PC-9 (cell line): ENCODE measurements at regions of chr3 and their contacts with region 1.

Region 1: DNA sequence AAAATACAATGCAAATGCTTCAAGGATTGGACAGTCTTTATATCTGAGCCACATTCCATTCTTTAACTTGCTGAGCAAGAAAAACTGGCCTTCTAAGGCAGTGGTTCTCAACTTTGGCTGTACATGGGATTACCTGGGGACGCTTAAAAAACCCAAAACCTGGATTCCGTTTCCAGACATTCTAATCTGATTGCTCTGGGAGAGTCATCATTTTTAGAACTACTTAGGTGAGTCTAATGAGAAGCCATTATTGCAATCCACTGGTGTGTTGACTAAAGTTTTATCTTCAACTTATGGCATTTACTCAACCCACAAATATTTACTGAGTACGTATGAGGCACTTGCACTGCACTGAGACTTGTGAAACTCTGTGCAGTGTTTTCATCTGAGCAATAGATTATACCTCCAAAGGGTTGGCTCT is 195.7 kb upstream of the ATP11B start:
- DNase-seq: peak; percentile 48 to 98
- H3K4me3 ChIP-seq: no peak overlapping the region
- H3K27ac ChIP-seq: peak overlapping the region; percentile 68
- H3K4me1 ChIP-seq: peaks cover 25% of the 10 kb centered on the region
- H3K27me3 ChIP-seq: no peaks in the 10 kb centered on the region
- CTCF ChIP-seq: no peak

Region 2: GRCh38 chr3:182349051-182349450 is 248.6 kb before region 1 on chr3:
- CTCF ChIA-PET with region 1: interaction called, 15 read pairs
- POLR2A ChIA-PET with region 1: no interaction called
- intact Hi-C with region 1: no loop called
- DNase-seq: no peak
- H3K4me3 ChIP-seq: no peak overlapping the region
- H3K27ac ChIP-seq: no peak overlapping the region
- H3K4me1 ChIP-seq: no peaks in the 10 kb centered on the region
- H3K27me3 ChIP-seq: no peaks in the 10 kb centered on the region
- CTCF ChIP-seq: no peak

Region 3: GRCh38 chr3:182412065-182412464 is 185.6 kb before region 1 on chr3:
- CTCF ChIA-PET with region 1: no interaction called
- POLR2A ChIA-PET with region 1: no interaction called
- intact Hi-C with region 1: loop called (anchors 5 kb)
- DNase-seq: peak; percentile 67 to 95
- H3K4me3 ChIP-seq: no peak overlapping the region
- H3K27ac ChIP-seq: peak overlapping the region; percentile 50
- H3K4me1 ChIP-seq: peaks cover 15% of the 10 kb centered on the region
- H3K27me3 ChIP-seq: no peaks in the 10 kb centered on the region
- CTCF ChIP-seq: no peak

Region 4: DNA sequence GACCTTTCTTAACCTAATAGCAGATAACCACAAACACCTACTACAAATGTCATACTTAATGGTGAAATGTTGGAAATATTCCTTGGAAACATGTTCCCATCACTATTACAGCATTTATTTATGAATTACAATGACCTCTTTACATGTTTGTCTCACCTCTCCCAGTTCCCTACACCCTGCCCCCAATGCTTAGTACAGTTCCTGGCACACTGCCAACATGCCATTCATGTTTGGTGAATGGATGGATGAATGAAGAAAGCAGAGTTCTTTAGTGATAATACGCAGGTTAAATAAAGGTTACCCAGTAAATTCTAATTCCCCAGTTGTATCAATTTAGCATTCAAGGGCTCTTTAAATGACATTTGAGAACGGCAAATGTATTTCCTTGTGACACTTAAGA is 64.2 kb before region 1 on chr3:
- CTCF ChIA-PET with region 1: no interaction called
- POLR2A ChIA-PET with region 1: no interaction called
- intact Hi-C with region 1: no loop called
- DNase-seq: peak in 1 of 2 experiments; percentile 44
- H3K4me3 ChIP-seq: no peak overlapping the region
- H3K27ac ChIP-seq: no peak overlapping the region
- H3K4me1 ChIP-seq: peaks cover 11% of the 10 kb centered on the region
- H3K27me3 ChIP-seq: no peaks in the 10 kb centered on the region
- CTCF ChIP-seq: no peak

Region 5: DNA sequence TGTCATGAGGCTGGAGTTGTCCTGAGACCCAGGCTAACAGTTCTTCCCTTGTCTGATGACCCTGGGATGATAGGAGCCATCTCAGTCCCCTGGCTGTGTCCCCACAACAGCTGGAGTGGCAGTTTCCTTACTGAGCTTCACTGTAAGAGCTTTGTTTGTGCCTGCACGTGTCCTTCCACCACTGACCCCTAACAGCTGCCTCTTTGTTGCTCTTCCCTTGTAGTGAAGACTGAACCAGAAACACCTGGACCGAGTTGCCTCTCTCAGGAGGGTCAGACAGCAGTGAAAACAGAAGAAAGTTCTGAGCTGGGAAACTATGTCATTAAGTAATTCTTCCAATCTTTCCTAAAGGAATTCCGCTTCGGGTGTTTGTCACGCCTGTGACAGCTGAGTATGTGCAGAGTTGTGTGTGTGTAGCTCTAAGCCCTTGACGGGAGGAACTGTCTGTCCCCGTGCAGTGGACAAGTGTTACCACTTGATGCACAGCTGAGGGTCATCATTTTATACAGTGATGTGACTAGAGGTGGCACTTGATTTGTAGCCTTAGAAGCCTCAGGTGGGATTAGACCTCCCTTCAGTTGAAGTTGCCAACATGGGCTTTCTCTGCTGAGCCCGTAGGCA is 1202.7 kb after region 1 on chr3:
- CTCF ChIA-PET with region 1: no interaction called
- POLR2A ChIA-PET with region 1: no interaction called
- intact Hi-C with region 1: no loop called
- DNase-seq: no peak
- H3K4me3 ChIP-seq: no peak overlapping the region
- H3K27ac ChIP-seq: no peak overlapping the region
- H3K4me1 ChIP-seq: no peaks in the 10 kb centered on the region
- H3K27me3 ChIP-seq: no peaks in the 10 kb centered on the region
- CTCF ChIP-seq: no peak